ENCODE measurements at regions of chr16 and their contacts with region 1.

Region 1: GRCh38 chr16:66588981-66589713 is 9.9 kb downstream of the CMTM2 start:
- H3K4me3 Mint-ChIP-seq: no peak overlapping the region
- H3K27ac Mint-ChIP-seq: no peak overlapping the region
- H3K4me1 Mint-ChIP-seq: peaks cover 57% of the 10 kb centered on the region
- H3K27me3 Mint-ChIP-seq: peaks cover 7% of the 10 kb centered on the region

Region 2: GRCh38 chr16:66483689-66484481 is 105.3 kb before region 1 on chr16:
- intact Hi-C with region 1: loop called (anchors 2 kb)
- H3K4me3 Mint-ChIP-seq: no peak overlapping the region
- H3K27ac Mint-ChIP-seq: no peak overlapping the region
- H3K4me1 Mint-ChIP-seq: peaks cover 81% of the 10 kb centered on the region
- H3K27me3 Mint-ChIP-seq: no peaks in the 10 kb centered on the region